HEK293T (cell line): ENCODE measurements at regions of chr17 and their contacts with region 1.

Region 1: DNA sequence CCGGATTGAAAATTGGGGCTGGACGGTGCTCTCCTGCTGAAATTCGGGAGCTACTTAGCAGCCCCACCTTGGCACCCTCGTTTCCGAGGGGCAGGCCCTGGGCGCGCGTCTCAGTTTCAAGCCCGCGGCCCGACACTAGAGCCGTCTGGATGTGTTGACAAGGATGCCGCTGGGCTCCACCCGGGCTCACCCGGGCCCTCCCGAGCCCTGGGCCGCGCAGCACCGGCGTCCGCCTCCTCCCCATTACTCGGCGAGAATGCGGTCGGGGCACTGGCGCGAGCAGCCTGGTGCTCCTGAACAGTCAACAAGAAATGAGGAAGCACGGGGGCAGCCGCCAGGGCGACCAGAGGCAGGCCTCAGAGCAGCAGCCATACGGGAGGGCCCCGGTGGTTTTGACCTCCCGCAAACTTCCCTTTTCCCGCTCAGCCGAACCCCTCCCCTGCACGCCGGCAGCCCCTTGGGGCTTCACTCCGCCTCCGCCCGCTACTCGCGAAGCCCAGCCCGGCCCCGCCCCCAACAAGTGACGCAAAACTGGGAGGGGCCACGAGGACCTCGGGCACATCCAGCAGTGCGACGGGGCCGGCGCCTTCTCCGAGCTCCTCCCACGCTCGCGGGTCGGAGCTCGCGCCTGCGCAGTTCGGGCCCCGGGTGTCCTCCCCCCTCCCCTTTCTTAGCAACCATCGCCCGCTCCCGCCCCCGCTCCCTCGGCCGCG is 447 bp upstream of the SEC14L1 start:
- DNase-seq: peak; percentile 100

Region 2: DNA sequence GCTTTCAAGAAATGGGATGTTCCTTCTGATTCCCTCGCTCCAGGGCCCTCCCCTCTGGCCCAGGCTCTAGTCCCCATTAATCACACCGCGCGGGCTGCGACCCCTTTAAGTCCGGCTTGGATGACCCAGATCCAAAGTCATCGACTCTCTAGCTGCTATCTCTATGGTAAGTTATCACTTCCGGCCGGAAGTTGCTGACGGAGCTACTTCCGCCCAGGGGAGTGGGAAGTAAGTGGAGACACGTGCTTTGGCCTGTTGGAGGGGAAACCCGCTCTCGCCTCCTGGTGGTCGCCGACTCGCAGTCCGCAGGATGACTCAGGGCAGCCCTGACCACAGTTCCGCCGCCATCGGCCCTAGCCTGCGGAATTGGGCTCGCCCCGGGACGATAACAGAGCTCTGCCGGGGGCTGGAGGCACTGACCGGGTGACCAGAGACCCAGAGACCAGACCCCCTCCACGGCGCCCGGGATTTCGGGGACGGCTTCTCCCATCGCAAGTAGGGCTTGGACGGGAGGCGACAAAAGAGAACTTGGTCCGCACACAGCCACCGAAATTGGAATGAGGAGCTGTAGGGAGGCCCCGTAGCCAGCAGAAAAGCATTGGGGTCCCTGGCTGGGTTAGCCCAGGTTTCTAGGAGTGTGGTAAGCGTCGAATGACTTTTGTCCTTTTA is 51.7 kb before region 1 on chr17:
- CTCF ChIA-PET with region 1: interaction called, 5 read pairs
- POLR2A ChIA-PET with region 1: interaction called, 16 read pairs
- DNase-seq: peak; percentile 96

Region 3: GRCh38 chr17:77127735-77128361 is 12.5 kb before region 1 on chr17:
- CTCF ChIA-PET with region 1: interaction called, 5 read pairs
- POLR2A ChIA-PET with region 1: interaction called, 17 read pairs
- DNase-seq: no peak